Activated B cell treated with CpG ODN at 0.5 μM for 24 hours (primary cell): ENCODE measurements at regions of chrX and their contacts with region 1.

Region 1: DNA sequence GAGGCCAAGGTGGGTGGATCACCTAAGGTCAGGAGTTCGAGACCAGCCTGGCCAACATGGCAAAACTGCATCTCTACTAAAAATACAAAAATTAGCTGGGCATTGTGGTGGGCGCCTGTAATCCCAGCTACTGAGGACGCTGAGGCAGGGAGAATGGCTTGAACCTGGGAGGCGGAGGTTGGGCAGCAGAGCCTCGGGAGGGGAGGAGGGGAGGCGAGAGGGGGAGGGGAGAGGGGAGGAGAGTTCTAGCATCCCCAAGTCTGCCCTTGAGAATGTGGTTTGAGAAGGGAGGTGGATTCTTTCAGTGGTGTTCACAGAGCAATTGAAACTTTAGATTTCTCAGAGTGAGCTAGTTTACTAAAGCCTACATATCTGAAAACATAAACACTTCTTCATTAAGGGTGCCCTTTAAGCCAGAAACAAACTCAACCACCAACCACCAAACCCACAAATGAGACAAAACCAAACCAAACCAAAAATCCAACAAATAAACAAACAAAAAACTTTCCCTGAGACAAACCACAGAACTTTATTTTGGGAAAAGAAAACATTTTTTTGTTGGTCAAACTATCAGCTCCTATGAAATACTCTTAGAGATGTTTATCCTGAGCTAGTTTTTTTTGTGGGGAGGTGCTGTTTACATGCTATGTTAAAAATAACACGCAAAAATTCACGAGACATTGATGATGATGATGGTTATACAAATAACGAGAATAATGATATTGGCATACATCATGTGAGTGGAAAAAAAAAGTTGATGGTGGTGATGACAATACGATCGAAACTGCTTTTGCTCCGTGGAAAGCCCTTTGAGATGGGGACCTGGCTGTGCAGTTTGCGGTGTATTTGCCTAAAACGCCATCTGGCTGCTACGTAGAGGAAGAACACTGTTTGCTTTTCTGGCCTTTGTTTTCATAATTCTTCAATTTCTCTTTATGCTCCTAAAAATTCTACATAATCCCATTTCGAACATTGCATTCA is 98.2 kb upstream of the PRKX start:
- DNase-seq: no peak
- ATAC-seq: no peak
- H3K4me3 Mint-ChIP-seq: peak overlapping the region; percentile 24
- H3K27ac Mint-ChIP-seq: peak overlapping the region; percentile 41
- H3K4me1 Mint-ChIP-seq: peaks cover 9% of the 10 kb centered on the region
- H3K27me3 Mint-ChIP-seq: peaks cover 10% of the 10 kb centered on the region
- CTCF ChIP-seq: no peak

Region 2: GRCh38 chrX:2928191-2928763 is 883.3 kb before region 1 on chrX:
- CTCF ChIA-PET with region 1: no interaction called
- POLR2A ChIA-PET with region 1: interaction called, 15 read pairs
- intact Hi-C with region 1: no loop called
- DNase-seq: no peak
- ATAC-seq: peak; percentile 8
- H3K4me3 Mint-ChIP-seq: peak overlapping the region; percentile 91
- H3K27ac Mint-ChIP-seq: peak overlapping the region; percentile 86
- H3K4me1 Mint-ChIP-seq: no peaks in the 10 kb centered on the region
- H3K27me3 Mint-ChIP-seq: no peaks in the 10 kb centered on the region
- CTCF ChIP-seq: no peak

Region 3: GRCh38 chrX:3651276-3651675 is 160.3 kb before region 1 on chrX:
- CTCF ChIA-PET with region 1: interaction called, 18 read pairs
- POLR2A ChIA-PET with region 1: interaction called, 6 read pairs
- intact Hi-C with region 1: loop called (anchors 1 kb)
- DNase-seq: no peak
- ATAC-seq: no peak
- H3K4me3 Mint-ChIP-seq: no peak overlapping the region
- H3K27ac Mint-ChIP-seq: no peak overlapping the region
- H3K4me1 Mint-ChIP-seq: no peaks in the 10 kb centered on the region
- H3K27me3 Mint-ChIP-seq: no peaks in the 10 kb centered on the region
- CTCF ChIP-seq: no peak

Region 4: GRCh38 chrX:3697701-3698279 is 113.8 kb before region 1 on chrX:
- CTCF ChIA-PET with region 1: no interaction called
- POLR2A ChIA-PET with region 1: interaction called, 3 read pairs
- intact Hi-C with region 1: loop called (anchors 1 kb)
- DNase-seq: no peak
- ATAC-seq: peak; percentile 65
- H3K4me3 Mint-ChIP-seq: no peak overlapping the region
- H3K27ac Mint-ChIP-seq: peak overlapping the region; percentile 64
- H3K4me1 Mint-ChIP-seq: peaks cover 58% of the 10 kb centered on the region
- H3K27me3 Mint-ChIP-seq: no peaks in the 10 kb centered on the region
- CTCF ChIP-seq: no peak

Region 5: DNA sequence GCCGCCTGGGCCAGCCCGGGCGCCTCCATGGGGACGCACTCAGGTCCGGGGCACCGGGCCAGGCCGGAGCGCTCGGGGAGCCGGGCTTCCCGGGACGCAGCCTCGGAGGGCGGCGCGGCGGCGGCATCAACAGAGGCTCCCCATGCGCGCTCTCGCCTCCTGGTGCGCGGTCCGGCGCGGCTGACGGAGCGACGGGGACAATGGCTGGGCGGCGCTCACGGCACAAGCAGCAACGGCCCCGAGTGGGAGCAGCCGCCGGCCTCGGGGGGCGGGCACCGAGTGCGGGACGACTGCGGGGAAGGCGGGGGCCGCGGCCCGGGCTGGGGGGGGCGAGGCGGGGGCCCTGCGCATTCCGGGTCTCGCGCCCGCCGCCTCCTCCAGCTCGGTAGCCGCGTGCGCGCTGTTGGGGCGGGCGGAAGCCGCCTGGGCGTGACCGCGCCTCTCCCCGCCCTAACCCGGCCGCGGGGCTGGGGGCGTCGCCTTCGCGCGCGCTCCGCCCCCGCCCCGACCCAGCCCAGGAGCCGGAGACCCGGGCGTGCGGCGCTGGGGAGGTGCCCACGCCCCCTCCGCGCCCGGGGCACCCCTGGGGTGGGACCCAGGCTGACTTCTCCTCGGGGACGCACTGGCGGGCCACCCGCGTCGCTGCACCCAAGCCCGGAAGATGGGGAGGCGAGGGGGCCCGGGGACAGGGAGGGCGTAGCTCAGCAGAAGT is 98.2 kb before region 1 on chrX and contains the start of gene PRKX:
- CTCF ChIA-PET with region 1: no interaction called
- POLR2A ChIA-PET with region 1: interaction called, 4 read pairs
- intact Hi-C with region 1: loop called (anchors 1 kb)
- DNase-seq: peak; percentile 65
- ATAC-seq: peak; percentile 83
- H3K4me3 Mint-ChIP-seq: peak within 1 kb of the TSS; percentile 91
- H3K27ac Mint-ChIP-seq: peak within 1 kb of the TSS; percentile 73
- H3K4me1 Mint-ChIP-seq: peaks cover 20% of the 10 kb centered on the region
- H3K27me3 Mint-ChIP-seq: no peaks in the 10 kb centered on the region
- CTCF ChIP-seq: no peak
- total RNA-seq, gene PRKX: 23.9 and 24.3 TPM in 2 replicates